Gastrocnemius medialis (tissue), 4 donors: ENCODE measurements at regions of chr5 and their contacts with region 1.

Region 1: GRCh38 chr5:127358740-127359139 is 68.1 kb downstream of the MEGF10 start:
- DNase-seq: no peak
- ATAC-seq: no peak
- H3K4me3 ChIP-seq: no peak overlapping the region
- H3K27ac ChIP-seq: no peak overlapping the region
- H3K4me1 ChIP-seq: peaks cover 4 to 6% of the 10 kb centered on the region in 2 donors
- H3K27me3 ChIP-seq: no peaks in the 10 kb centered on the region
- CTCF ChIP-seq: no peak
- POLR2A ChIP-seq: no peak

Region 2: GRCh38 chr5:125961150-125961549 is 1397.6 kb before region 1 on chr5:
- in situ Hi-C with region 1: no loop called
- intact Hi-C with region 1: loop called (anchors 10 kb)
- DNase-seq: no peak
- ATAC-seq: no peak
- H3K4me3 ChIP-seq: no peak overlapping the region
- H3K27ac ChIP-seq: no peak overlapping the region
- H3K4me1 ChIP-seq: no peaks in the 10 kb centered on the region
- H3K27me3 ChIP-seq: no peaks in the 10 kb centered on the region
- CTCF ChIP-seq: no peak
- POLR2A ChIP-seq: no peak

Region 3: GRCh38 chr5:126794157-126794828 is 564.4 kb before region 1 on chr5:
- in situ Hi-C with region 1: no loop called
- intact Hi-C with region 1: no loop called
- DNase-seq: no peak
- ATAC-seq: no peak
- H3K4me3 ChIP-seq: no peak overlapping the region
- H3K27ac ChIP-seq: no peak overlapping the region
- H3K4me1 ChIP-seq: no peaks in the 10 kb centered on the region
- H3K27me3 ChIP-seq: no peaks in the 10 kb centered on the region
- CTCF ChIP-seq: no peak
- POLR2A ChIP-seq: no peak

Region 4: DNA sequence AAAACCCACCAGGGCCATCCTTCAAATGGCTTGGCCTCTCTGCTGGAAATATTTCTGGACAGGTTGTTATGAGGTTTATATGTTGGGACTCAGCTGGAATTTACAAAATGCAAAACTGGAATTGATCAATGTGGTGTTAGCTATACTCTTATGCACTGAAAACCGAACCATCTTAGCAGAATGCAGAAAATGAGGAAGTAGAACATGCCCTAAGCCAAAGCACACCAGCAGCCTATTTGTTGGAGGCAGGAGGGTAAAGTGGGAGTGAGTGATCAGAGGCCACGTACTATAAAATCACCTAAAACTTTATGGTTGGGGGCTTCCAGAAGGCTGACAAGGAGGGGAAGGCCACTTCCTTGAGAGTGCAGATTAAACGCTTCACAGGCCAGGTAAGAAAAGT is 221.8 kb before region 1 on chr5:
- in situ Hi-C with region 1: no loop called
- intact Hi-C with region 1: no loop called
- DNase-seq: no peak
- ATAC-seq: no peak
- H3K4me3 ChIP-seq: no peak overlapping the region
- H3K27ac ChIP-seq: no peak overlapping the region
- H3K4me1 ChIP-seq: no peaks in the 10 kb centered on the region
- H3K27me3 ChIP-seq: no peaks in the 10 kb centered on the region
- CTCF ChIP-seq: no peak
- POLR2A ChIP-seq: no peak